ENCODE measurements at regions of chr12 and their contacts with region 1.

Region 1: GRCh38 chr12:116277393-116278278 is at the start of gene MED13L:
- DNase-seq: peak; percentile 77 to 95 (median 88)
- ATAC-seq: peak; percentile 81
- H3K4me3 ChIP-seq: peak within 1 kb of the TSS; percentile 92
- H3K4me3 Mint-ChIP-seq: peak within 1 kb of the TSS; percentile 95
- H3K27ac ChIP-seq: peak within 1 kb of the TSS; percentile 9 to 13
- H3K27ac Mint-ChIP-seq: peak within 1 kb of the TSS; percentile 94
- H3K4me1 ChIP-seq: peaks cover 12% of the 10 kb centered on the region
- H3K4me1 Mint-ChIP-seq: peaks cover 43% of the 10 kb centered on the region
- H3K27me3 ChIP-seq: no peaks in the 10 kb centered on the region
- H3K27me3 Mint-ChIP-seq: no peaks in the 10 kb centered on the region
- CTCF ChIP-seq: no peak
- total RNA-seq, gene MED13L: 203 to 208 TPM

Region 2: DNA sequence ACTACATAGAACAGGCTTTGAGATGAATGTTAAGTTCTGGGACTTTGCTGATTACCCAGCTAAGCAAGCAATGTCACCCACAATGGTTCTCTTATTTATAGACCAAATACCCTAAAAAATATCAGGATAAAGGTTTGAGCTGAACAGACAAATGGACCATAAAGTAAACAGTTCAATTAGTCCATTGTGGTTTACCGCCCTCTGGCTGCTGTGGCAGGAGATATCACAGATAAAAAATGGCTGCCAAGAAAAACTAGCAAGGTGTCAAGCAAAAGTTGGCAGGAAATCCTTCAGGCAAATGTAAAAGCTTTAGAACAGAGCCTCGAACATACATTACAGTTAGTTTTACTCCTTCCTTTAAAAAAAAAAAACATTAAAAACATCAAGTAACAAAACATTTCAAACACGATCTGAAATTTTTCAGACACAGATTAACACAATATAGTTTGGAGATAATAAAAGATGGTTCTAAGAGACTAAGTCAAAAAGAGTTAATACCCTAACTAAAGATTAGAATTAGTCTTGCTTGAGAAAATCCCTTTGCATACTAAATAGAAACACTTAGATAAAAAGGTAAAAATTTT is 41.4 kb before region 1 on chr12:
- CTCF ChIA-PET with region 1: interaction called, 6 read pairs
- POLR2A ChIA-PET with region 1: interaction called, 12 read pairs
- intact Hi-C with region 1: loop called (anchors 5 kb)
- DNase-seq: peak; percentile 15 to 76 (median 31)
- ATAC-seq: peak; percentile 89
- H3K4me3 ChIP-seq: no peak overlapping the region
- H3K4me3 Mint-ChIP-seq: peak overlapping the region; percentile 3
- H3K27ac ChIP-seq: peak overlapping the region in 1 of 2 donors; percentile 22
- H3K27ac Mint-ChIP-seq: peak overlapping the region; percentile 46
- H3K4me1 ChIP-seq: peaks cover 7% of the 10 kb centered on the region
- H3K4me1 Mint-ChIP-seq: peaks cover 61% of the 10 kb centered on the region
- H3K27me3 ChIP-seq: no peaks in the 10 kb centered on the region
- H3K27me3 Mint-ChIP-seq: no peaks in the 10 kb centered on the region
- CTCF ChIP-seq: peak; percentile 74

Region 3: GRCh38 chr12:116266168-116266601 is 11.5 kb before region 1 on chr12:
- CTCF ChIA-PET with region 1: interaction called, 8 read pairs
- POLR2A ChIA-PET with region 1: interaction called, 6 read pairs
- intact Hi-C with region 1: loop called in 1 of 2 experiments (anchors 2 kb)
- DNase-seq: no peak
- ATAC-seq: no peak
- H3K4me3 ChIP-seq: no peak overlapping the region
- H3K4me3 Mint-ChIP-seq: no peak overlapping the region
- H3K27ac ChIP-seq: no peak overlapping the region
- H3K27ac Mint-ChIP-seq: no peak overlapping the region
- H3K4me1 ChIP-seq: peaks cover 22% of the 10 kb centered on the region
- H3K4me1 Mint-ChIP-seq: peaks cover 16% of the 10 kb centered on the region
- H3K27me3 ChIP-seq: no peaks in the 10 kb centered on the region
- H3K27me3 Mint-ChIP-seq: no peaks in the 10 kb centered on the region
- CTCF ChIP-seq: no peak

Region 4: DNA sequence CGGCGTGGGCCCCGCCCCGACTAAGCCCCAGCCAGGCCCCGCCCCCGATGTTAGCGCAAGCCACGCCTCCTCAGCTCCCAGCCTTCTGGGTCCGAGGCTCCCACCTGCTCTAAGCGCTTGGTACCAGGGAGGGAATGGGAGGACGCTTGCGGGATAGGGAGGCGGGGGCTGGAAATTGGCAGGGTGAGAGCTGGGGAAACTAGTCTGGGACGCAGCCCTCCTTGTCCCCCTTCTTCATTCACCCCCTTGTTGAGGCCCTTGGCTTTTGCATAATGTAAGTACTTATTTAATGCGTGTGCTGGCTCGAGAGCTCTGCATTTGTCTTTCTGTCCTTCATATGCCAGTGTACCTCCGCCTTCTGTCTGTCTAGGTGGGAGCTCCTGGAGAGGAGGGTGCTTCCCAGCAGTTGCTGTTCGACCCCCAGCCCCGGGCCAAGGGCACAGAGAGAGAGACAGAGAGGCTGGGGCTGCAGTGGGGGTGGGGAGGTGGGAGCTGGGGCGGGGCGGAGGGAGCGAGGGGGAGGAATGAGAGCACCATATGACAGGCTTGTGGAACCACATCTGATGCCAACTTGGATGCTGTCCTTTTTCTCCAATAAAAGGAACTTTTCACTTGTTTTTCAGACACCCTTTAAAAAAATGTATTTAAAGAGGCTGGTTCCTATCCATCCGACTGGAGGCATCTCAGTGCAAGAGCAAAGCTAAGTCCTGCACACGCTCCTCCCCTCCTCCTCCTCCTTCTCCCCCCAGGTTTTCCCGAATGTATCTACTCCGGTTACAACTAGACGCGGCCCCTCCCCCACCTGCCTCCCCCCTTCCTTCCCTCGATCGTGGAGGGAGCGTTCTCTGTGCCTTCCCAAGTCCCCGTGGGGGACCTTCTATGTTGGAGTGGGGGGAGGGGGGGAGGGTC is 256.0 kb after region 1 on chr12:
- CTCF ChIA-PET with region 1: no interaction called
- POLR2A ChIA-PET with region 1: no interaction called
- intact Hi-C with region 1: loop called in 1 of 2 experiments (anchors 10 kb)
- DNase-seq: peak; percentile 58 to 89 (median 70)
- ATAC-seq: peak; percentile 91
- H3K4me3 ChIP-seq: peak overlapping the region; percentile 67
- H3K4me3 Mint-ChIP-seq: peak overlapping the region; percentile 89
- H3K27ac ChIP-seq: no peak overlapping the region
- H3K27ac Mint-ChIP-seq: peak overlapping the region; percentile 22
- H3K4me1 ChIP-seq: peaks cover 28% of the 10 kb centered on the region
- H3K4me1 Mint-ChIP-seq: peaks cover 28% of the 10 kb centered on the region
- H3K27me3 ChIP-seq: no peaks in the 10 kb centered on the region
- H3K27me3 Mint-ChIP-seq: no peaks in the 10 kb centered on the region
- CTCF ChIP-seq: no peak

Region 5: GRCh38 chr12:116599285-116600136 is 321.9 kb after region 1 on chr12:
- CTCF ChIA-PET with region 1: interaction called, 3 read pairs
- POLR2A ChIA-PET with region 1: no interaction called
- intact Hi-C with region 1: loop called (anchors 2 to 10 kb)
- DNase-seq: peak; percentile 44 to 77 (median 58)
- ATAC-seq: peak; percentile 64
- H3K4me3 ChIP-seq: peak overlapping the region; percentile 4
- H3K4me3 Mint-ChIP-seq: no peak overlapping the region
- H3K27ac ChIP-seq: no peak overlapping the region
- H3K27ac Mint-ChIP-seq: no peak overlapping the region
- H3K4me1 ChIP-seq: peaks cover 23% of the 10 kb centered on the region
- H3K4me1 Mint-ChIP-seq: peaks cover 36% of the 10 kb centered on the region
- H3K27me3 ChIP-seq: no peaks in the 10 kb centered on the region
- H3K27me3 Mint-ChIP-seq: no peaks in the 10 kb centered on the region
- CTCF ChIP-seq: peak; percentile 67

Measured in CD4-positive, alpha-beta T cell (primary cell).